Activated CD4-positive, alpha-beta memory T cell treated with anti-CD3 and anti-CD28 coated beads, Interleukin-2, amount 10 ng/mL, durations not matched to agents 7 days and 5 days (primary cell): ENCODE measurements at regions of chr16 and their contacts with region 1.

Region 1: DNA sequence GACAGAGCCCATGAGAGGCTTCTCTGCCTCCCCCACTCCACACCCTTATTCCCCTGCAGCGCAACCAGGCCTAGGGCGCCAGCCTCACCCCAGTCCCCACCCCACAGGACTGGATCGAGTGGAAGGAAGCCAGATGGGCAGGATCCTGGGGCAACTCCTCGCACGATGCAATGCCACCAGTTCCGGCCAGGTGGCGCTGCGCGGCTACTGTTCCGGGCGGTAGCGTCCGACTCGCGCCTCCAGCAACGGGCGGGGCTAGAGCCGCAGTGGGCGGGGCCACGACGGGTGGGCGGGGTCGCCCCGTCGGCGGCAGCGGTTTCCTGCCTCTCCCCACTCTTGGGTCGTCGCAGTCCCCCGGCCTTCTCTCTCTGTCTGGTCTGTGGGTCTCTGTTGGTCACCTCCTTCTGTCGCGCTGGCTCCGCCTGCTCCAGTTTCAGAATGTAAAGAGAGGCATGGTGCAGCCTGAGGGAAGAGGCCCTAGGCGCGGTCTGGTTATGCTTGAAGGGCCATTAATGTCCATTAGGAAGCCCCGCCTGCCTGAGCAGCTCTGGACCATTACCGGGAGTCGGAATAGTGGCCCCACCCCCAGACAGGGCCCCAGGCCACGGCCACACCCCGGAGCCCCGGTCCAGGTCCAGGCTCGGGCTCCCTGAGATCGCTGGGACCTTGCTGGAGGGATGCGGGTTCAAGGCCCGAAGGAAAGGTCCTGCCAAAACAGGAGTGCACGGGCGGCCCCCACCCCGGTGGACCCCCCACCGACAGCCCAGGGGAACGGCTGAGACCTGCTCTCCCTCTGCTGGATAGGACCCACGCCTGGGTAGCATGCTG is 3.4 kb upstream of the NHERF2 start:
- DNase-seq: peak; percentile 97
- H3K4me3 Mint-ChIP-seq: peak overlapping the region; percentile 64
- H3K27ac Mint-ChIP-seq: peak overlapping the region; percentile 58
- H3K4me1 Mint-ChIP-seq: peaks cover 19% of the 10 kb centered on the region
- H3K27me3 Mint-ChIP-seq: peaks cover 46% of the 10 kb centered on the region

Region 2: DNA sequence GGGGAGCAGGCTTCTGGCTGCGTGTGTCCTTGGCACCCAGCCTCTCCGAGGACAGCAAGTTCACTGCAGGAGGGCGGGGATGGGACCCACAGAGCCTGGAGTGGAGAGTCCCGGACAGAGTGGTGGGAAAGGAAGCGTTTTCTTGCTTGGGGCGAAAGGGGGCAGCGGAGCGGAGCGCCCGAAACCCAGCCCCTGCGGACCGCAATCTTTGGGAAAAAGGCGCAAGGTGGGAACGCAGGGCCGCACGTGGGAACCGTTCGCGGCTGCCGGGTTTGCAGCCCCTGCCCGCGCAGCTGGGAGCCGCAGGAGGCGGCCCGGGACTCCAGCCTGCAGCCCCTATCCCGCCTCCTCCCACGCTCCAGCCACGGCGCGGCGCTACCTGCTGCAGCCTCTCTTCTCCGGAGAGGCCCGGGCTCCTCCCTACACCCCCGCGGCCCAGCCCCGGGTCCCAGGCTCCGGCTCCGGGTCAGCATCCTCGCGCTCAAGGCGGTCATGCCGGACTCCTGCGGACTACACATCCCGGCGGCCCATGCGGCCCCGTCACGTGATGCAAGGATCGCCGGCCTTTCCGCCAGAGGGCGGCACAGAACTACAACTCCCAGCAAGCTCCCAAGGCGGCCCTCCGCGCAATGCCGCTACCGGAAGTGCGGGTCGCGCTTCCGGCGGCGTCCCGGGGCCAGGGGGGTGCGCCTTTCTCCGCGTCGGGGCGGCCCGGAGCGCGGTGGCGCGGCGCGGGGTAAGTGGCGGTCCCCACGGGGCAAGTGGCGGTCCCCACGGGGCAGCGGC is 24.2 kb after region 1 on chr16 and contains the starts of genes NTHL1 and TSC2:
- CTCF ChIA-PET with region 1: interaction called, 12 read pairs
- POLR2A ChIA-PET with region 1: interaction called, 4 read pairs
- DNase-seq: peak; percentile 95
- H3K4me3 Mint-ChIP-seq: peak within 1 kb of the TSS; percentile 90
- H3K27ac Mint-ChIP-seq: peak within 1 kb of the TSS; percentile 73
- H3K4me1 Mint-ChIP-seq: peaks cover 21% of the 10 kb centered on the region
- H3K27me3 Mint-ChIP-seq: no peaks in the 10 kb centered on the region
- total RNA-seq, gene NTHL1: 22.5 to 24.5 TPM
- total RNA-seq, gene TSC2: 88.4 to 90.1 TPM